Mammary epithelial cell (primary cell): ENCODE measurements at regions of chr6 and their contacts with region 1.

Region 1: DNA sequence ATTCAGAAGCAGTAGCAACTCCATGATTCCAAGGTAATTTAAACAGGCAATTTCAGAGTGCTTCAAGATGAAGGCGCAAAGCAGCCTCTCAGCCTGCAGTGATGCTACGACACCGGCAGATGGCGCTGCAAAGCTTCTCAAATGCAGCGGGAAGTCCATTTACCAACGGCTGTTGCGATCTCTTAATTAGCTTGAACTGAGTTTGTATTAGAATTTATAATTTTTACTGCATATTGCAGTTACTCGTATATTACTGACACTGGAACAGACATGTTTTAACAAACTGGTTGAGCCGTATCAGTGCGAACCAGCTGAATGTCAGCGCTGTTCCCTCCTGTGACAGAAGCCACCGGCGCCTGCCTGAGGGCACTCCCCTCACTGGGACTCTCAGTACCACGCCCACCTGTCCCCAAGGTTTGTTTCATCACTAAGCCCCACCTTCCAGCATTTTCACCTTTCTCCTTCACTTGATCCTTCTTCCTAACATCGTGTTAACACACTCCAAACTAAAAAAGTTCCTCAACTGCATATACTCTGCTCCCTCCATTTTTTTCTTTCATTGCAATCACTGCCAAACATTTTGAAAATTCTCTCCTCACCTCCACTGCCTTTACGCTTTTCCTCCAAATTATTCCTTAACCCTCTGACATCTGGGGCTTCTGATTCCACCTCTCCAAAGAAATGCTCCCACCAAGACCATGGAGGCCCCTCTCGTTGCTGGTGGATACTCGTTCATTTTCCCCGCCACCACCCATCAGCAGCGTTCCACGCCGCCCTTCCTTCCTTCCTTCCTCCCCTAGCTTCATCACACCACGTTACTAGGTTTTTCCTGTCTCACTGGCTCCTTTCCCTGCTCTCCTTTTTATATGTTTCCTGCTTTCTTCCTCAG is 14.5 kb downstream of the GNL1 start:
- DNase-seq: peak; percentile 69
- H3K4me3 ChIP-seq: peak overlapping the region; percentile 1 to 32 (median 28)
- H3K27ac ChIP-seq: no peak overlapping the region
- H3K4me1 ChIP-seq: peaks cover 3% of the 10 kb centered on the region
- H3K27me3 ChIP-seq: no peaks in the 10 kb centered on the region
- CTCF ChIP-seq: peak; percentile 98 to 100

Region 2: DNA sequence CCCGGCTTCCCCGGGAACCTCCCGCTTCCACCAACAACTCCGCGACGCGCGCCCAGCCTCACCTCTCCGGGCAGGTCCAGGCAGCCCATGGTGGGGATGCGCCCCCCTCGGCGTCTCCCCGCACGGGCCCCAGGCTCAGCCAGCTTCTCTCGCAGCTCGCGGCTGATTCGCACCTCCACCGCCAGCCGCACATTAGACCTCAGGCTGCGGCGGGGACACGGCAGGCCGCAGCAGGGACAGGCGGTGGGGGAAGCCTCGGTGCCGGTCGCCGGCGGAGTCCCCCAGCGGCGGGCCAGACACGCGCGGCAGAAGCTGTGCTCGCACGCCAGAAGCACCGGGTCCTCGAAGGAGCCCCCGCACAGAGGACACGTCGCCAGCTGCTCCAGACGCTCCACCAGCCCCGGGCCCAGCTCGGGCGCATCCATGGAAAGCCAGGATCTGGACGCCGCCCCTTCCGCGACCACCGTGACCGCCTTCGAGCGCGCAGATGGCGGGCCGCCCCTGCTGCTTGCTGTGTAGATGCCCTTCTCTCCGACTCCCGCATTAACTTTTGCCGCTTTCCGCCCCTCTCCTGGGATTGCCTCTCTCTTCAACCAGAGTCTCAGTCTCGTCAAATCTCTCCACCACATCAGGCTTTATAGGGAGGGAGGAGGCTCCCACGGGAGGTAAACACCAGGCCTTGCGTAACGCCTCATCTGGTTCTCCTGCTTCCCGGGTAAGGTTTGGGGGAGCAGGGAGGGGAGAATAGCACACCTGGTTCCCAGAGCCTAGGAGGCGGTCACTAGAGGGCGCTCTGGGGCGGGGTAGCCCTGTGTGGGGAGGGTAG is 466.4 kb before region 1 on chr6 and contains the start of gene RNF39:
- CTCF ChIA-PET with region 1: no interaction called
- dilution Hi-C with region 1: loop called (anchors 10 kb)
- in situ Hi-C with region 1: no loop called
- intact Hi-C with region 1: no loop called
- DNase-seq: peak; percentile 79
- H3K4me3 ChIP-seq: peak within 1 kb of the TSS; percentile 74 to 77 (median 77)
- H3K27ac ChIP-seq: peak within 1 kb of the TSS; percentile 62
- H3K4me1 ChIP-seq: peaks cover 28% of the 10 kb centered on the region
- H3K27me3 ChIP-seq: peaks cover 9% of the 10 kb centered on the region
- CTCF ChIP-seq: peak in 1 of 2 donors; percentile 63
- total RNA-seq, gene RNF39: 2.5 to 5.4 TPM

Region 3: GRCh38 chr6:30483677-30484279 is 58.0 kb before region 1 on chr6:
- CTCF ChIA-PET with region 1: interaction called, 5 read pairs
- dilution Hi-C with region 1: no loop called
- in situ Hi-C with region 1: loop called in 1 of 2 experiments (anchors 5 kb)
- intact Hi-C with region 1: loop called (anchors 1 kb)
- DNase-seq: peak; percentile 50
- H3K4me3 ChIP-seq: no peak overlapping the region
- H3K27ac ChIP-seq: no peak overlapping the region
- H3K4me1 ChIP-seq: peaks cover 15% of the 10 kb centered on the region
- H3K27me3 ChIP-seq: peaks cover 10% of the 10 kb centered on the region
- CTCF ChIP-seq: peak; percentile 50 to 60

Region 4: GRCh38 chr6:30497714-30498113 is 44.0 kb before region 1 on chr6:
- CTCF ChIA-PET with region 1: interaction called, 3 read pairs
- dilution Hi-C with region 1: loop called (anchors 5 kb)
- in situ Hi-C with region 1: no loop called
- intact Hi-C with region 1: loop called (anchors 2 kb)
- DNase-seq: no peak
- H3K4me3 ChIP-seq: no peak overlapping the region
- H3K27ac ChIP-seq: no peak overlapping the region
- H3K4me1 ChIP-seq: peaks cover 19% of the 10 kb centered on the region
- H3K27me3 ChIP-seq: no peaks in the 10 kb centered on the region
- CTCF ChIP-seq: no peak

Region 5: GRCh38 chr6:30640476-30640875 is 98.7 kb after region 1 on chr6:
- CTCF ChIA-PET with region 1: no interaction called
- dilution Hi-C with region 1: loop called (anchors 5 kb)
- in situ Hi-C with region 1: no loop called
- intact Hi-C with region 1: no loop called
- DNase-seq: no peak
- H3K4me3 ChIP-seq: no peak overlapping the region
- H3K27ac ChIP-seq: no peak overlapping the region
- H3K4me1 ChIP-seq: no peaks in the 10 kb centered on the region
- H3K27me3 ChIP-seq: no peaks in the 10 kb centered on the region
- CTCF ChIP-seq: peak in 1 of 2 donors; percentile 2

Region 6: GRCh38 chr6:30672445-30673253 is 130.9 kb after region 1 on chr6 and contains the start of gene DHX16:
- CTCF ChIA-PET with region 1: no interaction called
- dilution Hi-C with region 1: loop called (anchors 5 kb)
- in situ Hi-C with region 1: no loop called
- intact Hi-C with region 1: loop called (anchors 5 kb)
- DNase-seq: peak; percentile 97
- H3K4me3 ChIP-seq: peak within 1 kb of the TSS; percentile 54 to 98 (median 94)
- H3K27ac ChIP-seq: peak within 1 kb of the TSS; percentile 70
- H3K4me1 ChIP-seq: peaks cover 9% of the 10 kb centered on the region
- H3K27me3 ChIP-seq: no peaks in the 10 kb centered on the region
- CTCF ChIP-seq: peak; percentile 78 to 97
- total RNA-seq, gene DHX16: 26.0 to 30.9 TPM

Region 7: GRCh38 chr6:30730601-30731435 is 189.1 kb after region 1 on chr6:
- CTCF ChIA-PET with region 1: interaction called, 15 read pairs
- dilution Hi-C with region 1: no loop called
- in situ Hi-C with region 1: no loop called
- intact Hi-C with region 1: loop called (anchors 1 kb)
- DNase-seq: peak; percentile 88
- H3K4me3 ChIP-seq: no peak overlapping the region
- H3K27ac ChIP-seq: no peak overlapping the region
- H3K4me1 ChIP-seq: peaks cover 5% of the 10 kb centered on the region
- H3K27me3 ChIP-seq: no peaks in the 10 kb centered on the region
- CTCF ChIP-seq: peak; percentile 81 to 95